ENCODE measurements at regions of chr1 and their contacts with region 1.

Region 1: GRCh38 chr1:78676347-78676982 is 26.8 kb downstream of the IFI44 start:
- DNase-seq: peak; percentile 48 to 70 (median 62)
- H3K4me3 ChIP-seq: no peak overlapping the region
- H3K4me3 Mint-ChIP-seq: no peak overlapping the region
- H3K27ac ChIP-seq: no peak overlapping the region
- H3K27ac Mint-ChIP-seq: no peak overlapping the region
- H3K4me1 ChIP-seq: no peaks in the 10 kb centered on the region
- H3K4me1 Mint-ChIP-seq: peaks cover 6% of the 10 kb centered on the region
- H3K27me3 ChIP-seq: no peaks in the 10 kb centered on the region
- H3K27me3 Mint-ChIP-seq: peaks cover 0 to 2% (median 2%) of the 10 kb centered on the region in 3 donors
- CTCF ChIP-seq: peak; percentile 91

Region 2: DNA sequence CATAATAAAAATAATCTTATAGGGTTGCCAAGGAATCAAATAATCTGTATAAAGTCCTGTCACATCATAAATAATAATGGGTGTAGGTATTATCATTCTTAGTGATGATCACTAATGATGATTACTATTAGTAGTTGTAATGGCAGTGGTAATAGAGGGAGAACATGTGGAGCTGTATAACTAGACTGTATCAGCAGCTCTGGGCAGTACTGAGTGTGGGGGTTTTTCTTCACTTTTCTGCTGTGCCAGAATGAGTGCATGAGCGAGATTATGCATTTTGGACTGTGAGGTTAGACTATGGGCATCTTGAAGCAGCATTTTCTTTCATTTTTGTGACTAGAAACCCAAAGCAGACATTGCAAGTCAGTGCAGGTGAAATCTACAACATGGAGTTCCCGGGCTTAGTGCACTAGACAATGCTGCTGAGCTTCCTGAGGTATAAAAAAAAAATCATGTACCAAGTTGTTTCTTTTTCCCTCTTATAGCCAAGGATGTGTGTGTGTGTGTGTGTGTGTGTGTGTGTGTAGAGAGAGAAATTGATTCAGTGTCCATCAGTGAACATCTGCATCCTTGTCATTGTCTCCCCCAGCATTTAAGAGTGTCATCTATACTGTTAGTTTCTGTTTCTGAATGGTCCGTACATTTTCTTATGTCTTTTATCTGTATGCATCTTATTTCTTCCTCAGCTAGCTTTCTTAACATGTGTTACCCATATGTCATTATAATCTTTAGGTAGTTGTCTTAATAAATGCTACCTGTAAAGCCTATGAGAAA is 544.1 kb before region 1 on chr1:
- intact Hi-C with region 1: loop called (anchors 10 kb)
- DNase-seq: no peak
- H3K4me3 ChIP-seq: no peak overlapping the region
- H3K4me3 Mint-ChIP-seq: no peak overlapping the region
- H3K27ac ChIP-seq: no peak overlapping the region
- H3K27ac Mint-ChIP-seq: no peak overlapping the region
- H3K4me1 ChIP-seq: no peaks in the 10 kb centered on the region
- H3K4me1 Mint-ChIP-seq: no peaks in the 10 kb centered on the region
- H3K27me3 ChIP-seq: no peaks in the 10 kb centered on the region
- H3K27me3 Mint-ChIP-seq: peaks cover 0 to 1% (median 0%) of the 10 kb centered on the region in 3 donors
- CTCF ChIP-seq: no peak

Region 3: GRCh38 chr1:78617615-78618026 is 58.8 kb before region 1 on chr1:
- intact Hi-C with region 1: loop called (anchors 2 to 5 kb)
- DNase-seq: peak; percentile 58 to 65 (median 58)
- H3K4me3 ChIP-seq: no peak overlapping the region
- H3K4me3 Mint-ChIP-seq: peak overlapping the region in 1 of 2 donors; percentile 43
- H3K27ac ChIP-seq: no peak overlapping the region
- H3K27ac Mint-ChIP-seq: no peak overlapping the region
- H3K4me1 ChIP-seq: peaks cover 20 to 29% of the 10 kb centered on the region in 2 donors
- H3K4me1 Mint-ChIP-seq: peaks cover 30% of the 10 kb centered on the region
- H3K27me3 ChIP-seq: no peaks in the 10 kb centered on the region
- H3K27me3 Mint-ChIP-seq: peaks cover 0 to 2% (median 0%) of the 10 kb centered on the region in 3 donors
- CTCF ChIP-seq: peak; percentile 80

Region 4: DNA sequence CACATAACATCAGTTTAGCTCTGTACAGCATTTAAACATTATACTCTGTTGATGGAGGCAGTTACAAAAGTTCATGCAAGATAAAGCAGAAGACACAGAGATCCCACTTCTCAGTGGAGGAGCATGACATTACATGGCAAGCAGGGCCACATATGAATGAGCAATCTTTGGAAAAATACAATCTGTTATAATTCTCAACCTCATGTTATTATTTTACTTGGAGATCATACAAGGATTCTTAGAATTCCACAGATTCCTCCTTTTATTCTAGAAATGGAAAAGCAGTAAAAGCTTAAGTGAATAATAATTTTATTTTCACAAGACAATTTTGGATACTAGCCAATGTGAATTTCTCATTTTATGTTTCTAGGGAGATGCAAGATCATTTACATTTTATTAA is 39.7 kb after region 1 on chr1:
- intact Hi-C with region 1: no loop called
- DNase-seq: no peak
- H3K4me3 ChIP-seq: no peak overlapping the region
- H3K4me3 Mint-ChIP-seq: no peak overlapping the region
- H3K27ac ChIP-seq: no peak overlapping the region
- H3K27ac Mint-ChIP-seq: no peak overlapping the region
- H3K4me1 ChIP-seq: no peaks in the 10 kb centered on the region
- H3K4me1 Mint-ChIP-seq: no peaks in the 10 kb centered on the region
- H3K27me3 ChIP-seq: no peaks in the 10 kb centered on the region
- H3K27me3 Mint-ChIP-seq: peaks cover 0 to 2% (median 2%) of the 10 kb centered on the region in 3 donors
- CTCF ChIP-seq: no peak